ENCODE measurements at regions of chr3 and their contacts with region 1.

Region 1: GRCh38 chr3:149273096-149273751 is 51.6 kb upstream of the CP start:
- DNase-seq: peak; percentile 42
- H3K4me3 ChIP-seq: no peak overlapping the region
- H3K27ac ChIP-seq: peak overlapping the region in 1 of 3 donors; percentile 21
- H3K4me1 ChIP-seq: peaks cover 5 to 9% of the 10 kb centered on the region in 2 donors
- H3K27me3 ChIP-seq: no peaks in the 10 kb centered on the region
- CTCF ChIP-seq: peak; percentile 60 to 100 (median 94)
- POLR2A ChIP-seq: no peak

Region 2: DNA sequence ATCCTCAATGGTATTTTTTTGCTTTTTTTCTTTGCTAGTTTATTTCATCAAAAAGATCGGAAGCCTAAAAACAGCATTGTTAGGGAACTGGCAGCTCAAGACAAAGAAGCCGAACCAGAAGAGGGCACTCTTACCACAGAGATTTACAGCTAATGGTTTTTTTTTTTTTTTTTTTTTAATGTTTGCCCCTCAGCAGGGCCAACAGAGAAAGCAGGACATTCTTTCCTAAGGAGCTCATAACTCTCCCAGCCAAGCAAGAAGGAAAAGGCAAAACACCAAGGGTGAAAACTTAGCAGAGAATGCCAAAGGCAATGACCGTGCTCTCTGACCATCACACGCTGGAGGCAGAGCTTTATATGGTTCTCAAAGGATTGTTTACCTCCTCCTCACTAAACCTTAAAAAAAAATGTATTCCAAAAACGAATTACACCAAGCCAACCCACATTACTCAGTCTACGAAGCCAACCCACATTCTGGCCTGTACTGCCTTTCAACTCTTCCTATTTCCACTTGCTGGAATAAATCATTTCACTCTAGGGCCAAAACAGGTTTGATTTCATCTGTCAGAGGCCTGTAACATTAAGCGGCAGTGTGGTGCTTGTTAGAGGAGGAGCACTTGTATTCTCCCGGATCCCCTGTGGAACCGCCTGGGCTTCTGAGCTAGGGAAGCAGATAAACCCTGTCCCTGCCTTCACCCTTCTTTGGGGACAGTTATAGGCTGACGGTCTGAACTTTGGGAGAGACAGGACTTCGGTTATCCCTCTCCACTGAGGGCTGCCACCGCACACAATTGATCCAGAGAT is 317.5 kb before region 1 on chr3:
- intact Hi-C with region 1: loop called (anchors 10 kb)
- DNase-seq: peak; percentile 49 to 51
- H3K4me3 ChIP-seq: no peak overlapping the region
- H3K27ac ChIP-seq: peak overlapping the region; percentile 65 to 87 (median 78)
- H3K4me1 ChIP-seq: peaks cover 5 to 7% of the 10 kb centered on the region in 2 donors
- H3K27me3 ChIP-seq: no peaks in the 10 kb centered on the region
- CTCF ChIP-seq: peak in 5 of 6 experiments; percentile 29 to 77 (median 54)
- POLR2A ChIP-seq: peak in 1 of 2 donors; percentile 39

Region 3: DNA sequence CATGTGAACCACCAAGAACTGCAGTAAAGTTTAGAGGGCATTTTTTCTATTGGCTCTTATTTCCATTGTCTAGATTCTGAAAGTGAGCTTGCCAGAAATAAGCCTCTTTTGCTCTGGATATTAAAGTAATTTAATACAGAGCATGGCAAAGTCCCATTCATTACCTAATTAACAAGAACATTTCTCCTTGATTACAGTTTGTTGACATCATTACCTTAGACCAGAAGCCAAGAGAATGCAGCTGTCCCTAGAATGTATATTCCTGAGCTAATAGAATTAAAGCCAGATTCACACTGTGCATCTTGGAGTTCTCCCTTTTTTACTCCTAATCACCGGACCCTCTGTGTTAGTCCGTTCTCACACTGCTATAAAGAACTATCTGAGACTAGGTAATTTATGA is 154.9 kb after region 1 on chr3:
- intact Hi-C with region 1: no loop called
- DNase-seq: no peak
- H3K4me3 ChIP-seq: no peak overlapping the region
- H3K27ac ChIP-seq: no peak overlapping the region
- H3K4me1 ChIP-seq: no peaks in the 10 kb centered on the region
- H3K27me3 ChIP-seq: no peaks in the 10 kb centered on the region
- CTCF ChIP-seq: no peak
- POLR2A ChIP-seq: no peak